AG04450 (cell line): ENCODE measurements at regions of chr15 and their contacts with region 1.

Region 1: GRCh38 chr15:74799856-74800547 is 12.6 kb upstream of the LMAN1L start:
- DNase-seq: no peak
- H3K4me3 ChIP-seq: no peak overlapping the region
- H3K27ac ChIP-seq: no peak overlapping the region
- H3K27me3 ChIP-seq: no peaks in the 10 kb centered on the region
- CTCF ChIP-seq: peak; percentile 98

Region 2: DNA sequence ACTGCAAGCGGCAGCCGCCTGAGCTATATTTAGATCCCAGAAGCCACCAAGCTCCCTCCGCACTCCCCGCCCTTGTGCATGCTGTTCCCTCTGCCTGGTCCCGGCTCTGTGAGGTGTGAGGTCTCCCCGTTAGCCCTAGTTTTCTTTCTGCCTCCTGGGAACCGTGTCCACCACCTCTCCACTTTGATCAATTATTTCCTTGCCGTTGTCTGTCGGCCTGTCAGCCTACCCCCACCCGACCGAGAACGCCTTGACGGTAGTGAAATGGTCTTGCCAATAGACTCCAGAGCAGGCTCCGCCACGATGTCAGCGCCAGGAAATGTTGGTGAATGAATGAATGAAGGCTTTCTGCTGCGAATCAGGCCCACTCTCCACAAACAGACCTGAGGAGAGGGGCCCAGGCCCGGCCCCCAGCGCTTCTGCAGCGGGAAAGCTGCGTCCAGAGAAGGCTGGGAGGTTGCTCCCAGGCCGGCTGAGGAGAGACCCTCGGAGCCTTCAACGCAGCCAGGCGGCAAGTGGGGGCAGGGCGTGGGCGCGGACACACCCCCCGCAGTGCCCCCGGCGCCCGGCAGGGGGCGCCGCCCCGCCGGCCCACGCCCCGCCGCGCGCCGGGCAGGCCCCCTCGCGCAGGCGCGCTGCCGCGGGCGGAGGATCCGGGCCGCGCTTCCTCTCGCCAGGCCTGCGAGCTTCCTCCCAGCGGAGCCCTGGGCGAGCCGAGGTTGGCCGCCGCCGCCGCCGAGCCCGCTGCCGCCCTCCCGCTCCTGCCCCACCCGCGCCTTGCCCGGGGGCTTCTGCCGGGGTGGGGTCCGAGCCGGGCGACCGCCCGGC is 18.4 kb before region 1 on chr15 and contains the start of gene CSK:
- CTCF ChIA-PET with region 1: interaction called, 10 read pairs
- POLR2A ChIA-PET with region 1: interaction called, 3 read pairs
- DNase-seq: no peak
- H3K4me3 ChIP-seq: peak within 1 kb of the TSS; percentile 90
- H3K27ac ChIP-seq: no peak within 1 kb of the TSS
- H3K27me3 ChIP-seq: no peaks in the 10 kb centered on the region
- CTCF ChIP-seq: peak; percentile 48
- polyA plus RNA-seq, gene CSK: 17.2 and 25.1 TPM in 2 replicates

Region 3: DNA sequence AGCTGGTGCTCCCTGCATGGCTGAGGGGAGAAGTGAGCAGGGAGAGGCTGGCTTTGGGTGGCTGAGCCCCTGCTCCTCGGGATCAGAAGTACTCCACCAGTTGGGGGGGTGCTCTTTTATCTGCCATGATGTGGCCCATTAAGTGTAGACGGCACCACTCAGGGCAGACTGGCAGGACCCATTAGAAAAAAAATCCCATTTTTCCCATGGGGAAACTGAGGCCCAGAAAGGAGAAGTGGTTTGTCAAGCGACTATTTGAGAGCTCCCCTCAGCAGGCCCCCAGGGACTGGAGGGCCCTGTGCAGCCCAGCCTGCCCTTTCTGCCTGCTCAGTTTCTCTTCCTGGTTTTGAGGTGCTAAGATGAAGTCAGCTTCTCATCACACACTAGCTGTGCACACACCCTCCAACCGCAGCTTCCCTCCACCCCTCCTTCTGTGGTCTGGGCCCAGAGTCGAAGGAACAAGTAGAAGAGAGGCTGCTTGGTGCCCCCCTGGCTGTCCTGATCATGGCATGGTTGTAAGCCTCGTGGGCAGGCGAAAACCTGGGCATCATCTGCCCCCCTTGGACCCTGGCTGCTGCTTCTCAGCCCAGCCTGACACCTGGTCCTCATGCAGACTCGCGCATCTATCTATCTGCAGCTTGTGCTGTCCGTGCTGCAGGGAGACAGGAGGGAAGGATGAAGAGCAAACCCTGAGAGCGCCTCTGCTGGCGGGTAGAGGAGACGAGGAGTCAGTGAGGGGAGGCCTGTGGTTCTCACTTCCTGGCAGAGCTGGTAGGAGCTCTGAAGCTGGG is 12.6 kb before region 1 on chr15:
- CTCF ChIA-PET with region 1: interaction called, 14 read pairs
- POLR2A ChIA-PET with region 1: interaction called, 3 read pairs
- DNase-seq: peak; percentile 37
- H3K4me3 ChIP-seq: no peak overlapping the region
- H3K27ac ChIP-seq: peak overlapping the region; percentile 47
- H3K27me3 ChIP-seq: no peaks in the 10 kb centered on the region
- CTCF ChIP-seq: peak; percentile 71